ENCODE measurements at regions of chr1 and their contacts with region 1.

Region 1: GRCh38 chr1:211258756-211259637 is at the start of gene RCOR3:
- DNase-seq: peak; percentile 81 to 96 (median 91)
- ATAC-seq: peak; percentile 76
- H3K4me3 ChIP-seq: peak within 1 kb of the TSS; percentile 74 to 88
- H3K4me3 Mint-ChIP-seq: peak within 1 kb of the TSS; percentile 95
- H3K27ac ChIP-seq: peak within 1 kb of the TSS; percentile 80 to 84
- H3K27ac Mint-ChIP-seq: peak within 1 kb of the TSS; percentile 94
- H3K4me1 ChIP-seq: peaks cover 16% of the 10 kb centered on the region
- H3K4me1 Mint-ChIP-seq: peaks cover 18% of the 10 kb centered on the region
- H3K27me3 ChIP-seq: no peaks in the 10 kb centered on the region
- H3K27me3 Mint-ChIP-seq: no peaks in the 10 kb centered on the region
- CTCF ChIP-seq: peak; percentile 40
- total RNA-seq, gene RCOR3: 54.6 to 61.1 TPM

Region 2: DNA sequence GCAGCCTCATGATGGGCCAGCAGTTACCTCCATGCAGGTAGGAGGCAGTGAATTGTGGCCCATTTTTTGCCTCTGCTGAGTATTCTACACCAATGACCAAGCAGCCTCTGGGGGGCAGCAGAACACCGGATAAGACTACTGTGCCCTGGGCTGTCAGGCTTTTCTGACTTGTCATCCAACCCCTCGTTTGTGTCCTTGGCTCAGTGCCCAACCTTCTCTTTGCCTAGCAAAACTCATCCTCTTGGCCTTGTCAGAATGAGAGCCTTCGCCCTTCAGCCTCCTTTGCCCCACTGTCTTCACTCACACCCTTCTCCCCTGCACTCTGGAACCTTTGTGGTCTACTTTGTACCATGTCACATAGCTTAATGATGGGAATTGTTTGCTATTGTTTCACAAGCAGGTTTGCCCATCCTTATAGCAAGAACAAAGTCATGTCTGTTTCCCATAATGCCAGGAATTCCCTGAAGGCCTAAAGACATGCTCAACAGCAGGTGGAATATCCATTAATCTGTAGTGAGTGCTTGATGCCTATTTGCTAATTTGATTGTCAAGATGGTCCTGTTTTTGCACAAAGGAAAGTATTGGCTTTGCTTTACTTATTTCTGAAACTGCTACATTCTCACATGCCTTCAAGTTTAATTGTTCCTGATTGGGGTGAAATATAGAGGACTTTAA is 674.4 kb before region 1 on chr1:
- CTCF ChIA-PET with region 1: no interaction called
- POLR2A ChIA-PET with region 1: no interaction called
- intact Hi-C with region 1: loop called in 1 of 2 experiments (anchors 10 kb)
- DNase-seq: peak; percentile 37 to 72 (median 63)
- ATAC-seq: no peak
- H3K4me3 ChIP-seq: no peak overlapping the region
- H3K4me3 Mint-ChIP-seq: no peak overlapping the region
- H3K27ac ChIP-seq: no peak overlapping the region
- H3K27ac Mint-ChIP-seq: no peak overlapping the region
- H3K4me1 ChIP-seq: peaks cover 4% of the 10 kb centered on the region
- H3K4me1 Mint-ChIP-seq: peaks cover 15% of the 10 kb centered on the region
- H3K27me3 ChIP-seq: no peaks in the 10 kb centered on the region
- H3K27me3 Mint-ChIP-seq: no peaks in the 10 kb centered on the region
- CTCF ChIP-seq: peak; percentile 41

Region 3: GRCh38 chr1:211229365-211229759 is 29.6 kb before region 1 on chr1:
- CTCF ChIA-PET with region 1: interaction called, 3 read pairs
- POLR2A ChIA-PET with region 1: interaction called, 8 read pairs
- intact Hi-C with region 1: loop called (anchors 1 kb)
- DNase-seq: peak in 5 of 9 experiments; percentile 0 to 50 (median 23)
- ATAC-seq: peak; percentile 61
- H3K4me3 ChIP-seq: peak overlapping the region; percentile 18 to 31
- H3K4me3 Mint-ChIP-seq: peak overlapping the region; percentile 66
- H3K27ac ChIP-seq: peak overlapping the region in 1 of 2 experiments; percentile 36
- H3K27ac Mint-ChIP-seq: peak overlapping the region; percentile 81
- H3K4me1 ChIP-seq: peaks cover 16% of the 10 kb centered on the region
- H3K4me1 Mint-ChIP-seq: peaks cover 27% of the 10 kb centered on the region
- H3K27me3 ChIP-seq: no peaks in the 10 kb centered on the region
- H3K27me3 Mint-ChIP-seq: no peaks in the 10 kb centered on the region
- CTCF ChIP-seq: no peak

Region 4: GRCh38 chr1:212291505-212292134 is 1032.6 kb after region 1 on chr1:
- CTCF ChIA-PET with region 1: no interaction called
- POLR2A ChIA-PET with region 1: no interaction called
- intact Hi-C with region 1: loop called in 1 of 2 experiments (anchors 2 kb)
- DNase-seq: peak in 2 of 9 experiments; percentile 71 to 81
- ATAC-seq: peak; percentile 73
- H3K4me3 ChIP-seq: no peak overlapping the region
- H3K4me3 Mint-ChIP-seq: peak overlapping the region; percentile 38
- H3K27ac ChIP-seq: no peak overlapping the region
- H3K27ac Mint-ChIP-seq: peak overlapping the region; percentile 16
- H3K4me1 ChIP-seq: peaks cover 63% of the 10 kb centered on the region
- H3K4me1 Mint-ChIP-seq: peaks cover 87% of the 10 kb centered on the region
- H3K27me3 ChIP-seq: no peaks in the 10 kb centered on the region
- H3K27me3 Mint-ChIP-seq: no peaks in the 10 kb centered on the region
- CTCF ChIP-seq: peak; percentile 73